Naive thymus-derived CD4-positive, alpha-beta T cell (primary cell): ENCODE measurements at regions of chr13 and their contacts with region 1.

Region 1: GRCh38 chr13:94327318-94327717 is 152.2 kb downstream of the DCT start:
- DNase-seq: peak in 6 of 9 donors; percentile 32 to 53 (median 43)
- ATAC-seq: peak; percentile 34
- H3K4me3 ChIP-seq: peak overlapping the region; percentile 11
- H3K4me3 Mint-ChIP-seq: peak overlapping the region; percentile 21 to 84 (median 73)
- H3K27ac ChIP-seq: no peak overlapping the region
- H3K27ac Mint-ChIP-seq: peak overlapping the region; percentile 0 to 88 (median 34)
- H3K4me1 ChIP-seq: peaks cover 64 to 88% of the 10 kb centered on the region in 2 donors
- H3K4me1 Mint-ChIP-seq: peaks cover 44 to 98% (median 88%) of the 10 kb centered on the region in 7 donors
- H3K27me3 ChIP-seq: peaks cover 0 to 4% of the 10 kb centered on the region in 2 donors
- H3K27me3 Mint-ChIP-seq: peaks cover 5 to 28% (median 15%) of the 10 kb centered on the region in 5 donors

Region 2: DNA sequence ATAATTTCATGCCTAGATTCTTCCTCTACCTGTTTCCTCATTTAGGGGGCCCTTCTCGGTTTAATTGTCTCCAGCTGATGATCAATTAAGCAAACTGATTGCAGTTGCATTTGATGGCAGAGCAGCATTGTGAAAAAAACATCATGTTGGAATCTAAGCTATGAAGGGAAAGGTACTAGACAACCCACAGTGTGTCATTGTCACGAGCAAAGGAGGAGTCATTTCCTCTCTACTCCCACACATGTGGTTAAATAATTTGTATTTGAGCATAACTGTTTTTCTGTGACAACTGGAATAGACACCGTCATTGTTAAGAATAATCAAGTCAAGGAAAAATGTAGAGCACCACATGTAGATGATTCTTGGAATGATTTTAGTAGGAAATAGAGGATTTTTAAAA is 88.2 kb before region 1 on chr13:
- CTCF ChIA-PET with region 1: interaction called, 7 read pairs
- POLR2A ChIA-PET with region 1: interaction called, 4 read pairs
- intact Hi-C with region 1: loop called in 1 of 2 experiments (anchors 5 kb)
- DNase-seq: peak in 7 of 9 donors; percentile 24 to 55 (median 35)
- ATAC-seq: peak; percentile 71
- H3K4me3 ChIP-seq: no peak overlapping the region
- H3K4me3 Mint-ChIP-seq: peak overlapping the region in 9 of 10 donors; percentile 12 to 59 (median 38)
- H3K27ac ChIP-seq: no peak overlapping the region
- H3K27ac Mint-ChIP-seq: peak overlapping the region in 7 of 9 donors; percentile 1 to 85 (median 24)
- H3K4me1 ChIP-seq: peaks cover 0 to 23% of the 10 kb centered on the region in 2 donors
- H3K4me1 Mint-ChIP-seq: peaks cover 24 to 45% (median 41%) of the 10 kb centered on the region in 7 donors
- H3K27me3 ChIP-seq: no peaks in the 10 kb centered on the region
- H3K27me3 Mint-ChIP-seq: no peaks in the 10 kb centered on the region

Region 3: DNA sequence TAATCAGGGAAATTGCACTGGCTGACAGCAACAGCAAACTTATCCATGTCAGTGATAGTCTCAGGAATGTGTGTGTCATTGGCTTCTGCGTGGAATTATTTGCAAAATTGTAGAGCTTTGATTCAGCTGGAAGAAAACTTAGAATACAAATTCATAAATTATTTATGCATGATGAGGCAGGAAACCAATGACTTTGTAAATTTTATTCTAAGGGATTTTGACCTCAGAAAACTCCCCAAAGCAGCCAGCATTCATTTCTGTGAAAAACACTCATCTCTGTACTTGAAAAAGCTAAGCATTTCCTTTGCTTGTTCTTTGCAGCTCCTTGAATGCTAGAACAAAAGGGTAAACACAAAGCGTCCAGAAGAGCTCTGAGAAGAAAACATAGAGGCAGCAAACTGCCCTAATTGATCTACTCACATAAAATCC is 10.2 kb before region 1 on chr13:
- CTCF ChIA-PET with region 1: interaction called, 3 read pairs
- POLR2A ChIA-PET with region 1: interaction called, 4 read pairs
- intact Hi-C with region 1: loop called in 1 of 2 experiments (anchors 1 kb)
- DNase-seq: no peak
- ATAC-seq: no peak
- H3K4me3 ChIP-seq: no peak overlapping the region
- H3K4me3 Mint-ChIP-seq: peak overlapping the region in 5 of 10 donors; percentile 6 to 32 (median 26)
- H3K27ac ChIP-seq: no peak overlapping the region
- H3K27ac Mint-ChIP-seq: peak overlapping the region in 2 of 9 donors; percentile 50 to 68
- H3K4me1 ChIP-seq: peaks cover 0 to 4% of the 10 kb centered on the region in 2 donors
- H3K4me1 Mint-ChIP-seq: peaks cover under 1 to 45% (median 18%) of the 10 kb centered on the region in 7 donors
- H3K27me3 ChIP-seq: no peaks in the 10 kb centered on the region
- H3K27me3 Mint-ChIP-seq: no peaks in the 10 kb centered on the region

Region 4: DNA sequence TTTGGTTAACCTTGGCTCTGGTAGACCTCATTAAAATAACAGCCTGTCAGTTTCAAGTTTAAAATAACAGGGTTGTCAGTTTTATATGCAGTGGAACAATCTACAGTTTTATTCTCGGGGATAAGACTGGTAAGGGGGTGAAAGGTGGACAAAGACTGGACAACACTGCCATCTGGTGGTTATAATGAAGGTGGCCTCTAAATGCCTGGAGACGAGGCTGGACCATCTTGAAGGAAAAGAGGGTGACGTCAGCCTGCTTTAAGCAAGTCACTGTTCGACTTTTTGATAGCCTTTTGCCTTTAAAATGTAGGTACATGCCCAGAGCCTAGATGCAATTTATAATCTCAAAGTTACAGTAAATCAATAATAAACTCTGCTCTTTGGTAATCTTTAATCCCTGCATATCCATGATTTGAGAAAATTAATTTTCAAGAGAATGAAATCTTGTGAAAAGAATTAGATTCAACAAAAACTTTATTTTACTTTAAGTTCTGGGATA is 35.1 kb after region 1 on chr13:
- CTCF ChIA-PET with region 1: interaction called, 7 read pairs
- POLR2A ChIA-PET with region 1: interaction called, 3 read pairs
- intact Hi-C with region 1: loop called in 1 of 2 experiments (anchors 1 kb)
- DNase-seq: peak in 8 of 9 donors; percentile 52 to 75 (median 69)
- ATAC-seq: peak; percentile 93
- H3K4me3 ChIP-seq: no peak overlapping the region
- H3K4me3 Mint-ChIP-seq: no peak overlapping the region
- H3K27ac ChIP-seq: no peak overlapping the region
- H3K27ac Mint-ChIP-seq: no peak overlapping the region
- H3K4me1 ChIP-seq: no peaks in the 10 kb centered on the region
- H3K4me1 Mint-ChIP-seq: peaks cover 0 to 6% (median 0%) of the 10 kb centered on the region in 7 donors
- H3K27me3 ChIP-seq: no peaks in the 10 kb centered on the region
- H3K27me3 Mint-ChIP-seq: peaks cover 0 to 16% (median 5%) of the 10 kb centered on the region in 5 donors

Region 5: GRCh38 chr13:94505730-94506129 is 178.4 kb after region 1 on chr13:
- CTCF ChIA-PET with region 1: no interaction called
- POLR2A ChIA-PET with region 1: no interaction called
- intact Hi-C with region 1: loop called in 1 of 2 experiments (anchors 5 kb)
- DNase-seq: no peak
- ATAC-seq: no peak
- H3K4me3 ChIP-seq: no peak overlapping the region
- H3K4me3 Mint-ChIP-seq: no peak overlapping the region
- H3K27ac ChIP-seq: no peak overlapping the region
- H3K27ac Mint-ChIP-seq: no peak overlapping the region
- H3K4me1 ChIP-seq: peaks cover 3 to 18% of the 10 kb centered on the region in 2 donors
- H3K4me1 Mint-ChIP-seq: peaks cover 5 to 23% (median 21%) of the 10 kb centered on the region in 7 donors
- H3K27me3 ChIP-seq: no peaks in the 10 kb centered on the region
- H3K27me3 Mint-ChIP-seq: peaks cover 3 to 23% (median 6%) of the 10 kb centered on the region in 5 donors

Region 6: GRCh38 chr13:94601446-94602431 is 274.4 kb after region 1 on chr13 and contains the start of gene GPR180:
- CTCF ChIA-PET with region 1: no interaction called
- POLR2A ChIA-PET with region 1: no interaction called
- intact Hi-C with region 1: loop called in 1 of 2 experiments (anchors 5 kb)
- DNase-seq: peak; percentile 67 to 92 (median 88)
- ATAC-seq: peak; percentile 99
- H3K4me3 ChIP-seq: peak within 1 kb of the TSS; percentile 58
- H3K4me3 Mint-ChIP-seq: peak within 1 kb of the TSS; percentile 79 to 90 (median 86)
- H3K27ac ChIP-seq: peak within 1 kb of the TSS; percentile 75
- H3K27ac Mint-ChIP-seq: peak within 1 kb of the TSS; percentile 82 to 90 (median 87)
- H3K4me1 ChIP-seq: peaks cover 0 to 10% of the 10 kb centered on the region in 2 donors
- H3K4me1 Mint-ChIP-seq: peaks cover 16 to 45% (median 32%) of the 10 kb centered on the region in 7 donors
- H3K27me3 ChIP-seq: no peaks in the 10 kb centered on the region
- H3K27me3 Mint-ChIP-seq: no peaks in the 10 kb centered on the region
- total RNA-seq, gene GPR180: 1.8 to 7.0 (median 5.4) TPM